Caco-2 (cell line): ENCODE measurements at regions of chr3 and their contacts with region 1.

Region 1: GRCh38 chr3:49673715-49674496 is at the start of gene APEH:
- DNase-seq: peak; percentile 99
- H3K4me3 ChIP-seq: peak within 1 kb of the TSS; percentile 75
- H3K4me3 Mint-ChIP-seq: peak within 1 kb of the TSS; percentile 93
- H3K27ac Mint-ChIP-seq: peak within 1 kb of the TSS; percentile 96
- H3K4me1 ChIP-seq: peaks cover 7% of the 10 kb centered on the region; the same call in 1 of the 2 replicates
- H3K4me1 Mint-ChIP-seq: peaks cover 11% of the 10 kb centered on the region
- H3K27me3 ChIP-seq: no peaks in the 10 kb centered on the region
- H3K27me3 Mint-ChIP-seq: no peaks in the 10 kb centered on the region
- CTCF ChIP-seq: no peak
- total RNA-seq, gene APEH: 236 and 279 TPM in 2 replicates

Region 2: DNA sequence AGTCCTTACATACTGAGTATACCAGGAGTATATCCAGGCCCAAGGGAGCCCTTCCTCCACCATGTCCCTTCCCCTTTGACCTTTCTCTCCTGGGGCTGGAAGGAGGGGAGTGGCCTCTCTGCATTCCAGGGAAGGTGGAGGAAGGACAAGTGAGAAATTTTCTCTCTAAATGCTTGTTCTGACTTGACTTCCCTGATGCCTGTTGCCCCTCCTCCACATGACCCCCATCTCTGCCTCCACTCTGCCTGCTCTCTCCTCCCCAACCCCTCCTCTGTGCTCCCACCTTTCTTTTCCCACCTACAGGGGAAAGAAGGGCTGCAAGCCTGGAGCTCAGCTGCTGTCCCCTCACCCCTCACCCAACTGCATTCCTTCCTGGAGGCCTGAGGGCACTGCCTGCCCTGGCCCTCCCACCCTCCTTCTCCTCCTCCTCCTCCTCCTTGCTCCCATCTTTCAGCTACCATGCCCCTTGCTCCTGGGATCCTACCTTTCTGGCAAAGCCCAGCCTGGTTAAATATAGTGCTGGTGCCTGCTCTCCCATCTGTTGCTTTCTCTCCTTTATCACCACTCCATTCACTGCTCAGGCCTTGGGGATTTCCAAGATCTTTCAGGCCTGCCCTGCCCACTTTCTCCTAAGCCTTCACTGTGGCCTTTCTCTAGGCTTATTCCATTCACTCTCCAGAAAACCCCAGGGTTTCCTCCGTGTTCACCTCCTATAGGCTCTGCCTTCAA is 212.3 kb before region 1 on chr3:
- CTCF ChIA-PET with region 1: no interaction called
- POLR2A ChIA-PET with region 1: no interaction called
- intact Hi-C with region 1: loop called (anchors 1 kb)
- DNase-seq: peak; percentile 88 to 92
- H3K4me3 ChIP-seq: no peak overlapping the region
- H3K4me3 Mint-ChIP-seq: peak overlapping the region; percentile 52
- H3K27ac Mint-ChIP-seq: peak overlapping the region; percentile 91
- H3K4me1 ChIP-seq: peaks cover 70% of the 10 kb centered on the region
- H3K4me1 Mint-ChIP-seq: peaks cover 48% of the 10 kb centered on the region
- H3K27me3 ChIP-seq: no peaks in the 10 kb centered on the region
- H3K27me3 Mint-ChIP-seq: no peaks in the 10 kb centered on the region
- CTCF ChIP-seq: no peak

Region 3: DNA sequence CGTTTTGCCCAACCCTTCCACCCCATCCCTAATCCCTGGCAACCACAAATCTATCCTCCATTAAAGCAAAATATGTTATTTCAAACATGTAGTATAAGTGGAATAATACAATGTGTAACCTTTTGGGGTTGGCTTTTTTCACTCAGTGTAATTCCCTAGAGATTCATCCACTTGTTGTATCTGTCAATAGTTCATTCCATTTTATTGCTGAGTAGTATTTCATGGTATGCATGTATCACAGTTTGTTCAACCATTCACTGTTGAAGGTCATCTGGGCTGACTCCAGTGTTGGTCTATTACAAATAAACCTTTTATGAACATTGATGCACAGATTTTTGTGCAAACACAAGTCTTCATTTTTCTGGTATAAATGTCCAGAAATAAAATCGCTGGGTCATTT is 80.9 kb before region 1 on chr3:
- CTCF ChIA-PET with region 1: no interaction called
- POLR2A ChIA-PET with region 1: no interaction called
- intact Hi-C with region 1: loop called (anchors 5 kb)
- DNase-seq: no peak
- H3K4me3 ChIP-seq: no peak overlapping the region
- H3K4me3 Mint-ChIP-seq: no peak overlapping the region
- H3K27ac Mint-ChIP-seq: no peak overlapping the region
- H3K4me1 ChIP-seq: no peaks in the 10 kb centered on the region
- H3K4me1 Mint-ChIP-seq: no peaks in the 10 kb centered on the region
- H3K27me3 ChIP-seq: no peaks in the 10 kb centered on the region
- H3K27me3 Mint-ChIP-seq: no peaks in the 10 kb centered on the region
- CTCF ChIP-seq: no peak

Region 4: DNA sequence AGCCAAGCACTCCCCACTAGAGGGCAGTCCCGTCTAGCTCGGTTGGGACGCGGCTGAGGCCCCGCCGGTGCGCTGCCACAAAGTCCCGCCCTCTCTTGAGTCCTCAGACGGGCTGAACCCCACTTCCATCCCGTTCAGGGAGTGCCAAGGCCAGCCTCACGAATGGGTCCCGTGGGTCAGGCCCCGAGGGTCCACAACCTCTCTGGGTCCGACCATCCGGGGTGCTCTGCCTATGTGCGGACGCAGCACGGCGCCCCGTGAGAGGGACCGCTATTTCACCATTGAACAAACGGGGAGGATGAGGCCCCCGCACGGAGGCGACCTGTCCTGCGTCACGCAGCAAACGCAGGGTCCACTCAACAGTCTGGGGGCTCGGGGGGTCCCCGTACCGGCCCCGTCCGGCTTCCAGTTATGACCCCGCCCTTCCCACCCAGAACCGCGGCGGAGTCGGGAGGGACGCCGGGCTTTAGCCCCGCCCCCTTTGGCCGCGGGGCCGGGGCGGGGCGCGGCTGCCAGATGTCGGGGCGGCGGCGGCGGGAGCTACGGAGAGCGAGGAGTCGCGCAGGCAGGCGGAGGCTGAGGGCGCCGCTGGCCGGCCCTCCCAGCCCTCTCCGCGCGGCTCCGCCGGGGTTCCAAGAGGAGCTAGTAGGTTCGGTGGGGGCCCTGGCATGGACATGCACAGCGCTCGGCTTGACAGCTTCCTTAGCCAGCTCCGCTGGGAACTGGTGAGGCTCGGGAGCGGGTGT is 129.0 kb after region 1 on chr3 and contains the start of gene INKA1:
- CTCF ChIA-PET with region 1: interaction called, 14 read pairs
- POLR2A ChIA-PET with region 1: no interaction called
- intact Hi-C with region 1: no loop called
- DNase-seq: peak; percentile 82 to 89
- H3K4me3 ChIP-seq: peak within 1 kb of the TSS; percentile 74
- H3K4me3 Mint-ChIP-seq: peak within 1 kb of the TSS; percentile 91
- H3K27ac Mint-ChIP-seq: peak within 1 kb of the TSS; percentile 71
- H3K4me1 ChIP-seq: no peaks in the 10 kb centered on the region
- H3K4me1 Mint-ChIP-seq: peaks cover 16% of the 10 kb centered on the region
- H3K27me3 ChIP-seq: no peaks in the 10 kb centered on the region
- H3K27me3 Mint-ChIP-seq: peaks cover 2% of the 10 kb centered on the region
- CTCF ChIP-seq: peak; percentile 78 to 88
- total RNA-seq, gene INKA1: not detected in 2 replicates